PC-9 (cell line): ENCODE measurements at regions of chr1 and their contacts with region 1.

Region 1: DNA sequence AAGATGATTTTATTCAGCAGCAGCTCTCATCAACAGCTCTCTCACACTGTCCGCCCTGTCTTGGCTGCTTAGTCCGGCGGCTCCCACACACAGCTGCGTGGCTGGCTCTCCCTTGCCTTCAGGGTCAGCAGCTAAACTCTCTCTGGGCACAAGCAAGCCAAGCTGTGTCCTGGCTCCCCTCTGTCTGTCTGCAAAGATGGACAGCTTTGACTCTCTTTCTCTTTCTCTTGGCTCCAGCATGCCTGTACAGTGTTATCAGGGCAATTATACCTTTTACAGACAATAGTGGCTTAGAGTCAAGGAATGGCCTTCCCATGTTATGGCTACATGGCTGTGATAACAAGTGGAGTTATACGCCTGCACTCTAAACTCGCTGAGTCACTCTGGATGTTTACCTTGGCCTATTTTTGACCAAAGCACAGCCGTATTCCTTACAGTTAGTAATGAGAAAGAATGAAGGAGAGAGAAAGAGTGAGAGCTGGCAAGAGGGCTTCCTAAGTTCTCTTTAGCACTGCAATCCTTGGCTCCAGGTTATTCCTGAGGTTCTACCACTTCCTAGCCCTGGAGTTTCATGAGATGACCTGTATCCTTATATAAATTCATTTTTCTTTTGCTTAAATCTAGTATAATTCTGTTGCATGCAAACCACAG is 59.9 kb upstream of the ZSWIM5 start:
- DNase-seq: peak in 1 of 2 experiments; percentile 42
- H3K4me3 ChIP-seq: no peak overlapping the region
- H3K27ac ChIP-seq: peak overlapping the region; percentile 53
- H3K4me1 ChIP-seq: peaks cover 12% of the 10 kb centered on the region
- H3K27me3 ChIP-seq: no peaks in the 10 kb centered on the region
- CTCF ChIP-seq: no peak

Region 2: DNA sequence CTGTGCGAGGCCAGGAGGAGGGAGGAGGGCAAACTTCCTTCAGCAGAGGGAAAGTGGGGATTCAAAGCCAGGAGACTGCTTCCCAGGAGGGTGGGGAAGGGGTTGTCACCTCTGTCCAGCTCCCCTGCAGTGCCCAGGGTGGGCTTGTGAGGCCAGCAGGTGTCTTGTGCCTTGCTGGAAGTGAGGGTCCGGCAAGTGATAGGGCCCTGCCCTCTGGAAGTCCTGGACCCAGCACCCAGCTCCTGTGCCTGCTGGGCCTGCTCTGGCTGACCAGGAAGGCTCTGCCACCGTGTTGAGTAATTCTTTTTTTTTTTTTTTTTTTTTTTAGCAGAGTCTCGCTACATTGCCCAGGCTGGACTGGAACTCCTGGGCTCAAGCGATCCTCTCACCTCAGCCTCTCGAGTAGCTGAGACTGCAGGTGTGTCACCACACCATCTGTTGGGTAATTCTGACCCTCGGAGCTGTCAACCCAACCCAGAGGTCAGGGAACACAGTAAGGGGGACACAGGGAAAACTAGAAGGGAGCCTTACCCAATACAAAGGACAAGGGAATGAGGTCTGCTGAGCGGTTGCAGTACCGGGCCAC is 479.3 kb before region 1 on chr1:
- CTCF ChIA-PET with region 1: no interaction called
- POLR2A ChIA-PET with region 1: interaction called, 10 read pairs
- intact Hi-C with region 1: no loop called
- DNase-seq: no peak
- H3K4me3 ChIP-seq: no peak overlapping the region
- H3K27ac ChIP-seq: no peak overlapping the region
- H3K4me1 ChIP-seq: no peaks in the 10 kb centered on the region
- H3K27me3 ChIP-seq: no peaks in the 10 kb centered on the region
- CTCF ChIP-seq: no peak

Region 3: DNA sequence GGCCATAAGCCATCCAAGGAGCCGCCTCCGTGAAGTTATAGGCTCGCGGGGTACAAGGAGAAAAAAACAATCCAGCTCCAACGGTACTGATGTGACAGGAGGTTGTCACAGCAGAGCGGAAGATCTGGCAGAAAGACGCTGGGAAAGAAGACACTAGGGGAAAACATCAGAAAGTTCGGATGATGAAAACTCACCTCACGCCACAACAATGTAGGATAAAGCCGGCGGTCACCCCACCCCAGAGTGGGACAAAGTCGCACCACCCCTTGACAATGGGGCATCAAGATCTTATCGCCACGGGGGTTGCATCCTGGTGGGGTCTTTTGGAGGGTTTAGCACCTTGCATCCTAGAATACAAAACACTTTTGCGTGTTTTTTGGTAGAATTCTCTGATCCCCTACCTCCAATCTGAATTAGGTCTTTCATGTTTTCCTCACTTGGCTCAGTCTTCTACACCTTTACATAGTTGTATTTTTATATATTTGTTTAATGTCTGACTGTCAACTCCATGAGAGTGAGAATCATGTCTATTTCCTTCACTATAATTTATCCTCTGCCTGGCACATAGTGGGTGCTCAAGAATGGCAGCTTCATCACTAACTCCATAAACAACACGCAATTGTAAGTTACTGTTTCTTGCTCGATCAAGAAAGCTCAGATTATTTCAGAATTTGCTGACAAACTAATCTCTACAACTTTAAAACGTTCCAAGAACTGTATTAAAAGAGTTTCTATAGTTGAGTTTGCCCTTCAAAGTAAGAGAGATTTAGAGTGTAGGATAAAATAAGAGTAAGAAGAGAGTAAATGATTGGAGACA is 59.3 kb before region 1 on chr1:
- CTCF ChIA-PET with region 1: interaction called, 11 read pairs
- POLR2A ChIA-PET with region 1: interaction called, 4 read pairs
- intact Hi-C with region 1: no loop called
- DNase-seq: no peak
- H3K4me3 ChIP-seq: peak overlapping the region; percentile 95; the same call in 1 of the 2 replicates
- H3K27ac ChIP-seq: no peak overlapping the region
- H3K4me1 ChIP-seq: peaks cover 13% of the 10 kb centered on the region
- H3K27me3 ChIP-seq: peaks cover 6% of the 10 kb centered on the region; the same call in 1 of the 2 replicates
- CTCF ChIP-seq: no peak

Region 4: GRCh38 chr1:45326627-45327623 is 60.6 kb after region 1 on chr1 and contains the start of gene HPDL:
- CTCF ChIA-PET with region 1: no interaction called
- POLR2A ChIA-PET with region 1: no interaction called
- intact Hi-C with region 1: no loop called
- DNase-seq: peak in 1 of 2 experiments; percentile 47
- H3K4me3 ChIP-seq: peak within 1 kb of the TSS; percentile 85
- H3K27ac ChIP-seq: peak within 1 kb of the TSS; percentile 77
- H3K4me1 ChIP-seq: peaks cover 41% of the 10 kb centered on the region
- H3K27me3 ChIP-seq: no peaks in the 10 kb centered on the region
- CTCF ChIP-seq: no peak
- total RNA-seq, gene HPDL: 10.4 and 12.7 TPM in 2 replicates